Right cardiac atrium (tissue), 5 donors: ENCODE measurements at regions of chr2 and their contacts with region 1.

Region 1: GRCh38 chr2:165293440-165294353 is 54.5 kb downstream of the SCN2A start:
- DNase-seq: no peak
- ATAC-seq: peak; percentile 99
- H3K4me3 ChIP-seq: no peak overlapping the region
- H3K27ac ChIP-seq: no peak overlapping the region
- H3K4me1 ChIP-seq: no peaks in the 10 kb centered on the region
- H3K27me3 ChIP-seq: no peaks in the 10 kb centered on the region

Region 2: DNA sequence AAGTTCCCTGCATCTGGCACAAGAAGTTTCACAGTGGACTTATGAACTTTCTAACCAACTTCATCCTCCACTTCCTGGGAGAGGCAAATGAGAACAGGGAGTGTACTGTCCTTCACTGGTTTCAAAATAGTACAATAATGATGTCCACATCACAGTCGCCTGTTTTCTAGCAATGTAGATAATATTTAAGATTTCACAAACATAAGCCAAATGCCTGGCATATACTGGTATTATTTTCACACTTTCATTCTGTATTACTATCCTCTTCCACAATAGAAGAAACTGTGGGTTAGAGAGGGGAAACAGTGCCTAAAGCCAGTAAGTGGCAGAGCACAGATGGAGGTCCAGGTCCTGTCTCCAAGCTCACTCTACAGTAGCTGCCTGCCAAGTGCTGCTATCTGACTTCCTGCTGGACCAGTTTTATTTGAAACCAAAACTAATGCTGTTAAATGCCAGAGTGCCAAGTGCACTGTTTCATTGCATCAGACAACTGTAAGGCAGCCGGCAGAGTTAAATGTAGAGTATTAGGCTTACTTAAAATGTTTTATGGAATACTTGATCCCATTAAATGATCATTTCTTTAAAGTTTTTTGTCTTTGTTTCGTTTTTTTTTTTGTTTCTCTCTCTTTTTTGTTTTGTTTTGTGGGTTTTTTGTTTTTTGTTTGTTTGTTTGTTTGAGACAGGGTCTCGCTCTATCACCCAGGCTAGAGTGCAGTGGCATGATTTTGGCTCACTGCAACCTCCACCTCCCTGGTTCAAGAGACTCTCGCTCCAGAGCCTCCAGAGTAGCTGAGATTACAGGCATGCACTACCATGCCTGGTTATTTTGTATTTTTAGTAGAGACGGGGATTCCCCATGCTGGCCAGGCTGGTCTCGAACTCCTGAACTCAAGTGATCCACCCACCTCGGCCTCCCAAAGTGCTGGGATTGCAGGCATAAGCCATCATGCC is 467.1 kb before region 1 on chr2:
- intact Hi-C with region 1: no loop called
- DNase-seq: peak; percentile 49 to 77 (median 51)
- ATAC-seq: peak; percentile 92 to 94
- H3K4me3 ChIP-seq: no peak overlapping the region
- H3K27ac ChIP-seq: peak overlapping the region; percentile 42
- H3K4me1 ChIP-seq: peaks cover 5% of the 10 kb centered on the region
- H3K27me3 ChIP-seq: no peaks in the 10 kb centered on the region

Region 3: GRCh38 chr2:165239856-165240515 is 53.7 kb before region 1 on chr2:
- intact Hi-C with region 1: loop called in 2 of 4 experiments (anchors 5 to 10 kb)
- DNase-seq: no peak
- ATAC-seq: no peak
- H3K4me3 ChIP-seq: no peak overlapping the region
- H3K27ac ChIP-seq: no peak overlapping the region
- H3K4me1 ChIP-seq: no peaks in the 10 kb centered on the region
- H3K27me3 ChIP-seq: no peaks in the 10 kb centered on the region